ENCODE measurements at regions of chr11 and their contacts with region 1.

Region 1: GRCh38 chr11:124070915-124071635 is 29.9 kb upstream of the OR10G7 start:
- DNase-seq: peak; percentile 45 to 76
- H3K4me3 ChIP-seq: no peak overlapping the region
- H3K27ac ChIP-seq: no peak overlapping the region
- H3K4me1 ChIP-seq: peaks cover 4 to 12% of the 10 kb centered on the region in 2 donors
- H3K27me3 ChIP-seq: no peaks in the 10 kb centered on the region
- CTCF ChIP-seq: peak in 5 of 6 experiments; percentile 62 to 83 (median 66)
- POLR2A ChIP-seq: no peak

Region 2: DNA sequence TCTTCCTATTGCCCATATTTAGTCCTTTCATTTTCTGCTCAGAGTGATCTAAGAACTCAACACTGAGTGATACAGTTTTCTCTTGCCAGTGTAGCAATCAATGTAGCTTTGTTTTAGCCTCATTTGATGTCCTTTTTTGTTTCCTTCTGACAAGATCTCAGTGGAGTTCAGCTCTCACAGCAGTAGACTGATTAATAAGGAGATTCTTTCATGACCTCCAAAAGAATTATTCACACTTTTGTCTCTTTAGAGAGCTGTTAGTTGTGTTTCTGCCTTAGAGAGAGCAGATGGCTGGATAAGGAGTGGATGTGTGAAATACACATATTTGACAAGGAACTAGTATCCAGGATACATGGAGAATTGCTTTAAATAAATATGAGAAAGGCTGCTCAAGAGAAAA is 179.0 kb before region 1 on chr11:
- intact Hi-C with region 1: no loop called
- DNase-seq: no peak
- H3K4me3 ChIP-seq: no peak overlapping the region
- H3K27ac ChIP-seq: no peak overlapping the region
- H3K4me1 ChIP-seq: no peaks in the 10 kb centered on the region
- H3K27me3 ChIP-seq: no peaks in the 10 kb centered on the region
- CTCF ChIP-seq: no peak
- POLR2A ChIP-seq: no peak

Region 3: GRCh38 chr11:124194698-124195410 is 123.8 kb after region 1 on chr11:
- intact Hi-C with region 1: loop called (anchors 5 kb)
- DNase-seq: peak; percentile 44 to 51
- H3K4me3 ChIP-seq: no peak overlapping the region
- H3K27ac ChIP-seq: no peak overlapping the region
- H3K4me1 ChIP-seq: no peaks in the 10 kb centered on the region
- H3K27me3 ChIP-seq: no peaks in the 10 kb centered on the region
- CTCF ChIP-seq: peak; percentile 17 to 64 (median 56)
- POLR2A ChIP-seq: no peak